Activated CD8-positive, alpha-beta T cell treated with anti-CD3 and anti-CD28 coated beads, Interleukin-2, amount 10 ng/mL, durations not matched to agents 7 days and 5 days (primary cell): ENCODE measurements at regions of chr12 and their contacts with region 1.

Region 1: DNA sequence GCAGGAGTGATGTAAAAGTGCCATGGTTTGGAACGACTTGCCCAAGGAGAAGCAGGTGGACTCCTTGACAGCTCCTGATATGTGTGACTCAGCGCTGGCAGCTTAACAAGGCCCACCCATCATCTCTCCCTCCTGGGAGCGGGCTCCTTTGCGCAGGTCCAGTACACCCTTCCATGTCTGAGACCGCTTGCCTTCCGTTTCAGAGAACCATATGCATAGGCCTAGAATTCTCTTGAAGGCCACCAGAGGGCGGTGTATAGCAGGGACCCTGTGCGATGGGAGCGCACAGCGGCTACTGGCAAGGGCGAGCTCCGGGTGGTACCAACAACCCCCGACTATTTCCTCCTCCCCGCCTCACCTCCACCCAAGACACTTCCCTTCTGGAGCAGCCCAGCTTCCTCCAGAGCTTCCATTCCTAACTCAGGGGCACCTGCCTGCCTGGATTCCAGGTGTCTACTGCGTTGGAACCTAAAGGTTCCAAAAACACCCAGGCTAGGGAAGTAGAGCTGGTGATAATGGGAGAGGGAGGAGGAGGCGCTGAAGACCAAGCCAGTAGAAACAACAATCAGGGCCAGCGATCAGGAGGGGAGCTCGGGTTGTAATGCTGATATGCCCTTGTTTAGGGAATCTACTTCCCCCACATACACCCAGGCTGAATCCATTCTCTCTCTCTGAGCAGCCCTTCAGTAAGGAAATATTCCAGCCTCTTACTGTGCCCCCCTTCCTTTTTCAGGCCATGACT is 6.2 kb downstream of the DHH start:
- DNase-seq: peak; percentile 86
- ATAC-seq: peak; percentile 87
- H3K4me3 Mint-ChIP-seq: no peak overlapping the region
- H3K27ac Mint-ChIP-seq: peak overlapping the region; percentile 31
- H3K4me1 Mint-ChIP-seq: peaks cover 64% of the 10 kb centered on the region
- H3K27me3 Mint-ChIP-seq: peaks cover 41% of the 10 kb centered on the region

Region 2: GRCh38 chr12:48995061-48995879 is 93.1 kb before region 1 on chr12:
- CTCF ChIA-PET with region 1: interaction called, 17 read pairs
- POLR2A ChIA-PET with region 1: no interaction called
- DNase-seq: peak; percentile 64
- ATAC-seq: peak; percentile 43
- H3K4me3 Mint-ChIP-seq: no peak overlapping the region
- H3K27ac Mint-ChIP-seq: no peak overlapping the region
- H3K4me1 Mint-ChIP-seq: peaks cover 36% of the 10 kb centered on the region
- H3K27me3 Mint-ChIP-seq: peaks cover 58% of the 10 kb centered on the region

Region 3: DNA sequence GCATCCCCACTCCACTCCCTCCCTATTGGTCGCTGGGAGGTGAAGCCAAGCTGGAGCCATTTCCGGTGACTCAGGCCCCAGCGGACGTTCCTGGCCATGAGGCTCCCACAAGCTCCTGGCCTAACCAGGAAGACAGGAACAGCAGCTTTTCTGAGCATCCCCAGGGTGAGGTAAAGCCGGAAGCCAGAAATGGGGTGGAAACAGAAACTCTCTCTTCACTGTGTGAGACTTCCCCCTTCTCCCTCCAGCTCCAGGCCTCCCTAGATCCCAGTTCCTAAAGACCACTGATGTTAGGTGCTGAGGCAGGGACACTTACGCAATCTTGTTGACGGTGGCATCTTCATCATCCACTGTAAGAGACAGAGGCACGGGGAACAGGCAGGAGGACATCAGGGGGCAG is 17.2 kb after region 1 on chr12:
- CTCF ChIA-PET with region 1: interaction called, 179 read pairs
- POLR2A ChIA-PET with region 1: interaction called, 9 read pairs
- DNase-seq: no peak
- ATAC-seq: no peak
- H3K4me3 Mint-ChIP-seq: no peak overlapping the region
- H3K27ac Mint-ChIP-seq: no peak overlapping the region
- H3K4me1 Mint-ChIP-seq: peaks cover 35% of the 10 kb centered on the region
- H3K27me3 Mint-ChIP-seq: no peaks in the 10 kb centered on the region

Region 4: GRCh38 chr12:49121047-49121696 is 32.8 kb after region 1 on chr12:
- CTCF ChIA-PET with region 1: interaction called, 11 read pairs
- POLR2A ChIA-PET with region 1: no interaction called
- DNase-seq: no peak
- ATAC-seq: no peak
- H3K4me3 Mint-ChIP-seq: no peak overlapping the region
- H3K27ac Mint-ChIP-seq: no peak overlapping the region
- H3K4me1 Mint-ChIP-seq: peaks cover 2% of the 10 kb centered on the region
- H3K27me3 Mint-ChIP-seq: peaks cover 4% of the 10 kb centered on the region

Region 5: DNA sequence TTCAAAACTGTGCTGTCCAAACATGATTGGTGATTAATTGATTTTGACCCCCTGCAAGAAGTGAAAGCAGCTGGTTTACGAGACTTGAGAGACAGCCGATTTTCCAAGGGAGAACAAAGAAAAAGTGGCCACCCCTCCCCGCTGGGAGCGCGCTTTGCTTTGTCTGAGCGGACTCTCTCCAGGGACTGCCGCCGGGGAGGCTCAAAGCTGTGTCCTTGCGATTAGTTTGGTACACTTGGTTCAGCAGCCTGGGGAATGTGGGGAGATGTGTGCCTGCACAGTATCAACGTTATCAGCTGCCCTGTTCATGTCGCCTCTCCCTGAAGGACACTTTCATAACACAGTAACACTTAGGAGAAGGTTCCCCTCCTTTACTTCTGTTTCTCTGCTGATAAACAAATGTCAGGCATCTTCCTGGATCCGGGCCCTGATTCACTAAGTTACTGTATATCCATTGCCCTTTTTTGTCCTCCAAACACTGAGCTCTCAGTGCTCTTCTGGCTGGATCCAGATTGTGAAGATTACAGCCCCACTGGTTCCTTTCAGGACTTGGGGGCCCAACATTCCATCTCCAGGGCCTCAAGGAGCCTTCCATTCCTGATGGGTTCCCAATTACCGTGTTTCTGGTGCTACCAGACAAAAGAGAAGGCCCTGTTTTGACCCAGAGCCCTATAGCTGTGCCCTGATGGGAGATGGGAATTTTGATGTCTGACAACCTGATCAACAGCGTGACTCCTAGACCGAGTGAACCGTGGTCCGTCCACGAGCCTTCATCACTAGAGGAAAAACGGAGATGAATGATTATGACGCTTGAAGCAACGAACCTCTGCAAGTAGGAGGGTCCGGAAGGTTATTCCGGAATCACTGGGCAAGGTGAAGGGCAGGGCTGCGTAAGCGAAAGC is 144.8 kb after region 1 on chr12:
- CTCF ChIA-PET with region 1: interaction called, 34 read pairs
- POLR2A ChIA-PET with region 1: no interaction called
- DNase-seq: no peak
- ATAC-seq: no peak
- H3K4me3 Mint-ChIP-seq: no peak overlapping the region
- H3K27ac Mint-ChIP-seq: peak overlapping the region; percentile 29
- H3K4me1 Mint-ChIP-seq: peaks cover 21% of the 10 kb centered on the region
- H3K27me3 Mint-ChIP-seq: peaks cover 10% of the 10 kb centered on the region